Vagina (tissue), 2 donors: ENCODE measurements at regions of chr4 and their contacts with region 1.

Region 1: GRCh38 chr4:83809581-83809980 is 273.7 kb downstream of the GPAT3 start:
- DNase-seq: no peak
- H3K4me3 ChIP-seq: no peak overlapping the region
- H3K27ac ChIP-seq: no peak overlapping the region
- H3K4me1 ChIP-seq: no peaks in the 10 kb centered on the region
- H3K27me3 ChIP-seq: no peaks in the 10 kb centered on the region
- CTCF ChIP-seq: no peak
- POLR2A ChIP-seq: no peak

Region 2: GRCh38 chr4:83201761-83202160 is 607.8 kb before region 1 on chr4:
- intact Hi-C with region 1: loop called (anchors 5 kb)
- DNase-seq: no peak
- H3K4me3 ChIP-seq: no peak overlapping the region
- H3K27ac ChIP-seq: no peak overlapping the region
- H3K4me1 ChIP-seq: no peaks in the 10 kb centered on the region
- H3K27me3 ChIP-seq: no peaks in the 10 kb centered on the region
- CTCF ChIP-seq: no peak
- POLR2A ChIP-seq: no peak

Region 3: DNA sequence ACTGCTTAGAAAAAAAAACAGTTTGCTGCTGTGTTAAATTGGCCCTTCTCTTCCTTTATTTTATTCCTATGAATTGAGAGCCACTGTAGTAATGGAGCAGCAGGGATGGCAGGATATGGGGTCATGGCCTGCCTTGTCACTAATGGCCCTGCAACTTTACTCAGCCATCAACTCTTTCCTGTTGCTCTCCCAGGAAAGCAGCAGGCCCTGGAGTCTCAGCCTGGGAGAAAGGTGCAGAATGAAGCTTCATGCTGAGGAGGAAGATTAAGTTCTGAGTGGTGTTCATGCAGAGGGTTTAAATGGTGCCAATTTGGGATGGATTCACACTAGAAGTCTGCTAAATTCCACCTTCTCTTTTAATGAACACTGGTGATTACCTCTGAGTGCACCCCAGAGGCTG is 11.9 kb after region 1 on chr4:
- intact Hi-C with region 1: no loop called
- DNase-seq: no peak
- H3K4me3 ChIP-seq: no peak overlapping the region
- H3K27ac ChIP-seq: no peak overlapping the region
- H3K4me1 ChIP-seq: no peaks in the 10 kb centered on the region
- H3K27me3 ChIP-seq: no peaks in the 10 kb centered on the region
- CTCF ChIP-seq: no peak
- POLR2A ChIP-seq: no peak